Panc1 (cell line): ENCODE measurements at regions of chr6 and their contacts with region 1.

Region 1: DNA sequence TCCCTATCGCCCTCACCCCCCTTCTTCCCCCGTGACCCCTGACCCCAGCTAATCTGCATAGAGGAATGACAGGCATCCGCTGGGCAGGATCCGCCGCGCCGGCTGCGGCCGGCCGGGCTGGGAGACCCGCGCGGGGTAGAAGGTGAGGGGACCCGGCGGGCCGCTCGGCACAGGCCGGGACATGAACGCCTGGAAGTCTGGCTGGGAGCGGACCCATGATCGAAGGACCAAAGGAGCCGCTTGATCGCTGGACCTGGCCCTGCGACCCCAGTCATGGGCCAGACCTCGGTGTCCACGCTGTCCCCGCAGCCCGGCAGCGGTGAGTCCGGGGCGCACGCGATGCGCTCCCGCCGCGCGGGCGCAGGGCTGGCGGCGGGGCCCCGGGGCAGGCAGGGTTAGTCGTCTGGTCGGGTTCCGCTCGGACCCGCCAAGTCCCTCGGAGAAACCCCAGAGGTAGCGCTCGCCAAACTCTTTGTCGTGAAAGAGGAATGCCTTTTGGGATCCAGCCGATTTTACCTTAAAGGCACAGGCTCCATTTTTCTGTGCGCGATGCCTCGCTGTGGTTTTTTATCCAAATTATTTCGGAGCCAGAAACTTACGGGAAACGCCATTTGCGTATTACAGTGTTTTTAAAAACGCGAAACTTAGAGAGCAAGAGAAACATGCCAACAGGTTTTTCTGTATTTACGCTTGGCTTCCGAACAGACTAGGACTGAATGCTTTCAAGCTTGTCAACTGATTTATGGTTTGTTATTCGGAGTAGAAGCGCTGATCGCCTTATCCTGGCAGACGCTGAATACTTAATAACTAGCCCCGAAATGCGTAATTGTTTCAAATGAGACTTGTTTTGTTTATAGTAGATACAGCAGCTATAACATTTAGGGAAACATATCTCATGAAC is at the start of gene PHACTR2:
- DNase-seq: peak; percentile 5
- ATAC-seq: peak; percentile 96
- H3K4me3 ChIP-seq: peak within 1 kb of the TSS; percentile 79 to 84
- H3K27ac ChIP-seq: peak within 1 kb of the TSS; percentile 96
- H3K4me1 ChIP-seq: peaks cover 43% of the 10 kb centered on the region
- H3K27me3 ChIP-seq: no peaks in the 10 kb centered on the region
- CTCF ChIP-seq: no peak
- total RNA-seq, gene PHACTR2: 59.9 TPM

Region 2: DNA sequence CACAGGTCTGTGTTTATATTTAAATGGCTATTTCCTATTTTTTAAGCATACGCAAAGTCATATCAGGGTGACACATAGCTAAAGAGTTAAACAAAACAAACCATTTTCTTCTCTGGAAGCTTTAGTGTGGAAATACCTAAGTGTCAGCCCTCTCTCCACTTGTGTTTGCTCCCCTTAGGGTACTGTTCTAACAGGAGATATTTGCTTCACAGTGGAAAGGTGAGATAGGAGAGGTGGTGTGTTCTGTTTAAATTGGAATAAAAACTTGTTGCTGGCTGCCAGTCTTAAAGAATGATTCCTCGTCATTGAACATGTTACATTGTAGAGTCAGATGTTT is 18.5 kb after region 1 on chr6:
- CTCF ChIA-PET with region 1: no interaction called
- POLR2A ChIA-PET with region 1: no interaction called
- in situ Hi-C with region 1: no loop called
- intact Hi-C with region 1: loop called (anchors 1 kb)
- DNase-seq: no peak
- ATAC-seq: no peak
- H3K4me3 ChIP-seq: no peak overlapping the region
- H3K27ac ChIP-seq: peak overlapping the region; percentile 53; the same call in 1 of the 2 replicates
- H3K4me1 ChIP-seq: peaks cover 42% of the 10 kb centered on the region
- H3K27me3 ChIP-seq: no peaks in the 10 kb centered on the region
- CTCF ChIP-seq: no peak

Region 3: DNA sequence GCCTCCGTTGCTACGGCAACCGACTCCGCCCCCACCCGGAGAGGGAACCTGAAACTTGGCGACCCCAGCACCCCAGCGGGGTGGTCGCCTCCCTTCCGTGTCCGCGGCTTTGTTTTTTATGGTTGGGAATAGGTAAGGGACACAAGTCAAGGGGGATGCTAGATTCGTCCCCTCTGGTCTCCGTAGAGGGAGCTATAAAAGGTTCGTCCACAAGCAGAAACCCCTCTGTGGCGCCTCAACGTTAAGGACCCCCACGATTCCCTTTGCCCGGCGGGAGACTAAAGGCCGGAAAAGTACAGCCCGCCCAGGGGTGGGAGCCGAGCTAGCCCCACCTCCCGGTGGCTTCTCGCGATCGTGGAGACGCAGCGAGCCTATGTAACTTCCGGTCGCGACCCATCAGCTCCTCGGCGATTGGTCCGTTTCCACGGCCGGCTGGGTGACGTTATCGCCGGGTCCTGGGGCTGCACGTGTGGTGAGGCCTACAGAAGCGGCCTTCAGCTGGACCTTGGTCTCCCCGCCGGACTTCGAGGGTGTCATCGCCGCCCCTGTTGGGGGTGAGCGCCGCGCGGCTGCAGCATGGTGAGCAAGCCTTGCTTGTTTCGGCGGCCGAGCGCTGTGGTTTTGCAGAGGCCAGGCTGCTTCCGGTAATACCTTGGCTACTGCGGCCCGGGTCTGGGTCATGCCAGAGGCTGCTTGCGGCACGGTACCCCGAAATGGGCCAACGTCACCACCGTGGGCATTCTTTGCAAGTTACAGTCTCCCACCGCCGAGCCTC is 164.9 kb after region 1 on chr6 and contains the start of gene LTV1:
- CTCF ChIA-PET with region 1: no interaction called
- POLR2A ChIA-PET with region 1: interaction called, 3 read pairs
- in situ Hi-C with region 1: no loop called
- intact Hi-C with region 1: loop called (anchors 5 kb)
- DNase-seq: peak; percentile 72
- ATAC-seq: peak; percentile 100
- H3K4me3 ChIP-seq: peak within 1 kb of the TSS; percentile 89
- H3K27ac ChIP-seq: peak within 1 kb of the TSS; percentile 96
- H3K4me1 ChIP-seq: 0 out of 2 replicates have a peak, but pooled peaks cover 6% of the 10 kb centered on the region
- H3K27me3 ChIP-seq: no peaks in the 10 kb centered on the region
- CTCF ChIP-seq: no peak
- total RNA-seq, gene LTV1: 46.8 TPM